ENCODE measurements at regions of chr2 and their contacts with region 1.

Region 1: DNA sequence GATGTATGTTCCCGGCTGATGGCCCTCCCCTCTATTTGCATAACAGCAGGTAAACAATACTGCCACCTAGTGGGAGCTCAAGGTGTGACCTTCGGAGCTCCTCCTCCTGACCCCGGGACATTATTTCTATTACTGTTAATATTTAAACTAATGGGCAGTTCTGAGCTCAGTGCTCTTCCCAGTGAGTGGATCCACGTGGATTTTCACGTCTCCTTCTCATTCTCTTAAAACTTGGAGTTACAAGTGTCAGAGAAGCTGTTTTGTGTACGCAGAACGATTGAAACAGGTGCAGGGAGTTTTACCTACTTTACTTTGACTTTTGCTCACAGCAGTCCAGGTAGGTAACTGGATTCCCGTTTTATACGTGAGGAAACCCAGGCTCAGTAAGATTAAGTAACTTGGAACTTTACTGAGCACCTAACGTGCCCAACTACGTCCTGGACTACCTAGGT is 127.3 kb downstream of the PRKCE start:
- DNase-seq: peak; percentile 34
- H3K4me3 Mint-ChIP-seq: no peak overlapping the region
- H3K27ac Mint-ChIP-seq: no peak overlapping the region
- H3K4me1 Mint-ChIP-seq: peaks cover 5% of the 10 kb centered on the region
- H3K27me3 Mint-ChIP-seq: peaks cover 4% of the 10 kb centered on the region

Region 2: DNA sequence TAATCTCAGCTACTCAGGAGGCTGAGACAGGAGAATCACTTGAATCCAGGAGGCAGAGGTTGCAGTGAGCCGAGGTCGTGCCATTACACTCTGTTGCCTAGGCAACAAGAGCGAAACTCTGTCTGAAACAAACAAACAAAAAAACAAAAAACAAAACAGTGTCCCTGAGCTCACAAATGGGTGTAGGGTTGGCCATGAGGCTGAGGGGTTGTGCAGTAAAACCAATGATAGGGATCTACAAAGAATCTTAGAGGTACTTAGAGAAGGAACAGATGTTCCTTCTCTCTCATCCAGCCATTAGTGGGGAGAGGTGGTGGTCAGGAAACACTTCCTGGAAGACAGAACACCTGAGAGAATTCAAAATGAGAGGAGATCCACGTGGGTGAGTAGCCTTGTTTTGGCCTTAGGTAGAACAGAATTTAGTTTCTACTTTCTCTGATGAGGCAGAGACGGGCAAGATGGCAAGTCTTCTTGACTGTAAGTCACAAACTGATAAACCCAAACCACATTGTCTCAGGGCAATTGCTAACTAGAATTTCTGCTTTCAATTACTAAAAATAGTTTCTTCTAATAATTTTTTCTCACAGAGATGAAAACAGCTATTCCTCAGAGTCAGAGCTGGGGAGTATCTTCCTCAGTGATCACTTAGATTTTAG is 1671.5 kb before region 1 on chr2:
- intact Hi-C with region 1: no loop called
- DNase-seq: no peak
- H3K4me3 Mint-ChIP-seq: no peak overlapping the region
- H3K27ac Mint-ChIP-seq: no peak overlapping the region
- H3K4me1 Mint-ChIP-seq: peaks cover 5% of the 10 kb centered on the region
- H3K27me3 Mint-ChIP-seq: peaks cover 13% of the 10 kb centered on the region

Region 3: GRCh38 chr2:44981136-44982108 is 797.3 kb before region 1 on chr2:
- intact Hi-C with region 1: loop called (anchors 2 kb)
- DNase-seq: peak; percentile 31
- H3K4me3 Mint-ChIP-seq: no peak overlapping the region
- H3K27ac Mint-ChIP-seq: no peak overlapping the region
- H3K4me1 Mint-ChIP-seq: peaks cover 6% of the 10 kb centered on the region
- H3K27me3 Mint-ChIP-seq: peaks cover 26% of the 10 kb centered on the region

Region 4: GRCh38 chr2:45643543-45644542 is 134.9 kb before region 1 on chr2:
- intact Hi-C with region 1: loop called (anchors 1 kb)
- DNase-seq: peak; percentile 67
- H3K4me3 Mint-ChIP-seq: peak overlapping the region; percentile 70
- H3K27ac Mint-ChIP-seq: no peak overlapping the region
- H3K4me1 Mint-ChIP-seq: peaks cover 10% of the 10 kb centered on the region
- H3K27me3 Mint-ChIP-seq: peaks cover 32% of the 10 kb centered on the region

Region 5: GRCh38 chr2:45650851-45651414 is 127.8 kb before region 1 on chr2:
- intact Hi-C with region 1: loop called (anchors 1 kb)
- DNase-seq: peak; percentile 88
- H3K4me3 Mint-ChIP-seq: peak overlapping the region; percentile 90
- H3K27ac Mint-ChIP-seq: peak overlapping the region; percentile 94
- H3K4me1 Mint-ChIP-seq: peaks cover 28% of the 10 kb centered on the region
- H3K27me3 Mint-ChIP-seq: peaks cover 32% of the 10 kb centered on the region

Region 6: DNA sequence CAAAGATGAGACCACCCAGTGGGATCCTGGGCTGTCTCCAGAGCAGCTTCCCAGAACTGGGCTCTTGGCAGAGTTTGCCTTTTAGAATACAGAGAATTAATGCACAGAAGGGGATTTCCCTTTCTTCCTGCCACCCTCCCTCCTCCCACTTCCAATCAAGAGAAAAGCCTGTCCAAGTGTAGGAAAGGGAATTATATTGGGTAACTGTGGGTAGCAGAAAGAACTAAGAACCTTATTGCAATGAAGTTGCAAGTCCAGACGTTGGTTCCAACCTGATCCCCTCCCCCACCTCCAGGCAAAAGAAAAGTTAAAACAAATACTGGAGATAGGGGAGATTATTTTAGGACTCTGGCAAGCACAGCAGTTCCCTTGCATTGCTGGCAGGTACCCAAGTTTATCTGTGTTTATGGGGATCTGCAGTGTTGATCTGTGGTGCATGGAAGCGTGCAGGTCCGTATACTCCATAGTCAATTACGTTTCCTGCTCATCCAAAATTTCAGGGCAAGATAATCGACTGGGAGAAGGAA is 13.0 kb before region 1 on chr2:
- intact Hi-C with region 1: no loop called
- DNase-seq: no peak
- H3K4me3 Mint-ChIP-seq: no peak overlapping the region
- H3K27ac Mint-ChIP-seq: no peak overlapping the region
- H3K4me1 Mint-ChIP-seq: no peaks in the 10 kb centered on the region
- H3K27me3 Mint-ChIP-seq: peaks cover 5% of the 10 kb centered on the region

Region 7: GRCh38 chr2:45935791-45936622 is 157.3 kb after region 1 on chr2:
- intact Hi-C with region 1: loop called (anchors 1 kb)
- DNase-seq: peak; percentile 34
- H3K4me3 Mint-ChIP-seq: no peak overlapping the region
- H3K27ac Mint-ChIP-seq: no peak overlapping the region
- H3K4me1 Mint-ChIP-seq: peaks cover 4% of the 10 kb centered on the region
- H3K27me3 Mint-ChIP-seq: no peaks in the 10 kb centered on the region